SK-N-SH (cell line): ENCODE measurements at regions of chr15 and their contacts with region 1.

Region 1: GRCh38 chr15:89383365-89384175 is 48.9 kb upstream of the POLG start:
- DNase-seq: peak; percentile 81
- H3K4me3 ChIP-seq: no peak overlapping the region
- H3K27ac ChIP-seq: peak overlapping the region; percentile 40 to 92; a peak in 3 of 4 replicates
- H3K4me1 ChIP-seq: peaks cover 10 to 78% of the 10 kb centered on the region in 2 experiments
- H3K27me3 ChIP-seq: no peaks in the 10 kb centered on the region
- CTCF ChIP-seq: no peak
- EP300 ChIP-seq: peak; percentile 21 to 65; a peak in 2 of 4 replicates
- RAD21 ChIP-seq: peak; percentile 7; the same call in 1 of the 2 replicates

Region 2: GRCh38 chr15:89367485-89368451 is 15.8 kb before region 1 on chr15:
- CTCF ChIA-PET with region 1: interaction called, 766 read pairs
- POLR2A ChIA-PET with region 1: interaction called, 5 read pairs
- DNase-seq: peak; percentile 98
- H3K4me3 ChIP-seq: peak overlapping the region; percentile 52 to 64
- H3K27ac ChIP-seq: peak overlapping the region in 1 of 2 experiments; percentile 65; a peak in 1 of 4 replicates
- H3K4me1 ChIP-seq: peaks cover 0 to 59% of the 10 kb centered on the region in 2 experiments; a peak in 1 of 4 replicates
- H3K27me3 ChIP-seq: peaks cover 17% of the 10 kb centered on the region
- CTCF ChIP-seq: no peak
- EP300 ChIP-seq: no peak
- RAD21 ChIP-seq: no peak

Region 3: DNA sequence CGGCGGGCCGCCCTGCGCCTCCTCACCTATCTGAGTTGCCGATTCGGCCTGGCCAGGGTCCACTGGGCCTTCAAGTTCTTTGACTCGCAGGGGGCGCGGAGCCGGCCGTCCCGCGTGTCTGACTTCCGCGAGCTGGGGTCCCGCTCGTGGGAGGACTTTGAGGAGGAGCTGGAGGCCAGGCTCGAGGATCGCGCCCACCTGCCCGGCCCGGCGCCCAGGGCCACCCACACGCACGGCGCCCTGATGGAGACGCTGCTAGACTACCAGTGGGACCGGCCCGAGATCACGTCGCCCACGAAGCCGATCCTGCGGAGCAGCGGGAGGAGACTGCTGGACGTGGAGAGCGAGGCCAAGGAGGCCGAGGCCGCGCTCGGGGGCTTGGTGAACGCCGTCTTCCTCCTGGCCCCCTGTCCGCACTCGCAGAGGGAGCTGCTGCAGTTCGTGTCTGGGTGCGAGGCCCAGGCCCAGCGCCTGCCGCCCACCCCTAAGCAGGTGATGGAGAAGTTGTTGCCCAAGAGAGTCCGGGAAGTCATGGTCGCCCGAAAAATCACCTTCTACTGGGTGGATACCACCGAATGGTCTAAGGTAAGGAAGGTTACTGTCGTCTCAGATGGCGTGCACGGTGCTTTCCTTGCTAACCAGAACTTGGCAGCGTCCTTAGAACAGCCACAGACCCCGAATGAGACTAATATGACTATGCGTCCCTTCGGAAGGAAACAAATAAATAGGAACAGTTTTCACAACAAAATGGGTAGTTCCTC is 192.3 kb after region 1 on chr15:
- CTCF ChIA-PET with region 1: no interaction called
- POLR2A ChIA-PET with region 1: no interaction called
- DNase-seq: no peak
- H3K4me3 ChIP-seq: peak overlapping the region; percentile 80 to 83
- H3K27ac ChIP-seq: peak overlapping the region in 1 of 2 experiments; percentile 34; a peak in 2 of 4 replicates
- H3K4me1 ChIP-seq: peaks cover 0 to 12% of the 10 kb centered on the region in 2 experiments; a peak in 2 of 4 replicates
- H3K27me3 ChIP-seq: no peaks in the 10 kb centered on the region; the same call in 1 of the 2 replicates
- CTCF ChIP-seq: no peak
- EP300 ChIP-seq: no peak
- RAD21 ChIP-seq: no peak